Activated CD4-positive, alpha-beta T cell treated with anti-CD3 and anti-CD28 coated beads, Interleukin-2, amount 10 ng/mL, durations not matched to agents 24 days and 14 days (primary cell): ENCODE measurements at regions of chr1 and their contacts with region 1.

Region 1: GRCh38 chr1:228405987-228406265 is 709 bp downstream of the TRIM11 start:
- DNase-seq: no peak
- H3K4me3 Mint-ChIP-seq: peak overlapping the region; percentile 98
- H3K27ac Mint-ChIP-seq: peak overlapping the region; percentile 94
- H3K4me1 Mint-ChIP-seq: peaks cover 49% of the 10 kb centered on the region
- H3K27me3 Mint-ChIP-seq: no peaks in the 10 kb centered on the region

Region 2: DNA sequence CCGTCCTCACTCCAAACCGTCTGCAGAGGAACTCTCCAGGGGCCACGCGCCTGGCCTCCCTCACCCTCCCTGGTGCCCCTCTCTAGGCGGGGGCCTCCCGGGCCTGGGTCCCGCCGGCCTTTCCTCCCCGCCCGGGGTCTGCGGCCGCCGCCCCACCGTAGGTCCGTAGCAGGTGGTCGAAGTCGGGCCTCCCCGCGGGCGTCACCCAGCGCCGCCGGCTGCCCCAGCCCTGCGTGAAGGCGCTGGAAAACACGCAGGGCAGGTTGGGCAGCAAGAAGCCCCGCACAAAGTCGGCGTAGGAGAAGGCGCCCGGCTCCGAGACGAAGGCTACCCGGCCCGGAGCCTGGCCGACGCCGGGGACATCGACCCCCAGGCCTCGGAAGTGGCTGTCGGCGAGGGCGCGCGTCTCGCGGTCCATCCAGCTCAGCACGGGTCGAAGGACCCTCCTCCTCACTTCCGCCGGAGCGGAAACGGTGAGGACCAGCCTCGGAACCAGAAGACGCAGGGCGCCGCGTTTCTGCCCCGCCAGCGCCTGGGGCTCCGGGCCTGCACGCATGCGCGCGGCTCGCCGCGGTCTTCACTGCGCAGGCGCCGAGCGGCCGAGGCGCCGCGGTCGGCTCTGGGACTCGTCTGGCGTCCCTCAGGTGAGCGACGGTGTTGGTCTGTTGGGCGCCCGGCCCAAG is 670.9 kb before region 1 on chr1 and contains the starts of genes JMJD4 and SNAP47:
- intact Hi-C with region 1: loop called (anchors 1 kb)
- DNase-seq: peak; percentile 99
- H3K4me3 Mint-ChIP-seq: peak within 1 kb of the TSS; percentile 98
- H3K27ac Mint-ChIP-seq: peak within 1 kb of the TSS; percentile 93
- H3K4me1 Mint-ChIP-seq: peaks cover 26% of the 10 kb centered on the region
- H3K27me3 Mint-ChIP-seq: peaks cover 2% of the 10 kb centered on the region
- total RNA-seq, gene JMJD4: 34.8 and 35.1 TPM in 2 replicates
- total RNA-seq, gene SNAP47: 28.6 and 30.9 TPM in 2 replicates

Region 3: DNA sequence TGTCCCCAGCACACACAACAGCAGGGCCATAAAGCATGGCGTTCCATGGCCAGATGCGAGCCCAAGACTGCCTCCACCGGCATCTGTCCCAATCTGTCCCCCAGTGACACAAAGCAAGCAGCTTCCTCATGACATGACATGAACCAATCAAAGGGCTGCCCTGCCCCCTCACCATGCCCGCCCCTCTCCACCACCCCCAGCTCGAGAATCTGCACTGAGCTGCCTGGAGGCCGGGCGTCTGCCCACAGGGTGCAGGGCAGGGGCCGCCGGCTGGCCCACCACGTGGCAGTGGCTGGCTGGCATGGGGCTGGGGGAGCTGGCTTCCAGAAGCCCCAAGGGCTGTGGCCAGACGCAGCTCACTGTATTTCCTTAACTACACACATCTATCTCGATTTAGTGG is 486.0 kb before region 1 on chr1:
- intact Hi-C with region 1: no loop called
- DNase-seq: no peak
- H3K4me3 Mint-ChIP-seq: no peak overlapping the region
- H3K27ac Mint-ChIP-seq: no peak overlapping the region
- H3K4me1 Mint-ChIP-seq: no peaks in the 10 kb centered on the region
- H3K27me3 Mint-ChIP-seq: no peaks in the 10 kb centered on the region

Region 4: GRCh38 chr1:228109073-228109961 is 296.6 kb before region 1 on chr1 and contains the start of gene MRPL55:
- intact Hi-C with region 1: loop called (anchors 5 kb)
- DNase-seq: peak; percentile 100
- H3K4me3 Mint-ChIP-seq: peak within 1 kb of the TSS; percentile 95
- H3K27ac Mint-ChIP-seq: peak within 1 kb of the TSS; percentile 88
- H3K4me1 Mint-ChIP-seq: peaks cover 23% of the 10 kb centered on the region
- H3K27me3 Mint-ChIP-seq: peaks cover 2% of the 10 kb centered on the region
- total RNA-seq, gene MRPL55: 55.2 and 62.2 TPM in 2 replicates

Region 5: GRCh38 chr1:228212966-228213844 is 192.7 kb before region 1 on chr1:
- intact Hi-C with region 1: loop called (anchors 2 kb)
- DNase-seq: peak; percentile 95
- H3K4me3 Mint-ChIP-seq: peak overlapping the region; percentile 95
- H3K27ac Mint-ChIP-seq: peak overlapping the region; percentile 91
- H3K4me1 Mint-ChIP-seq: peaks cover 7% of the 10 kb centered on the region
- H3K27me3 Mint-ChIP-seq: no peaks in the 10 kb centered on the region

Region 6: GRCh38 chr1:228457396-228458176 is 51.7 kb after region 1 on chr1:
- intact Hi-C with region 1: loop called (anchors 1 kb)
- DNase-seq: peak; percentile 97
- H3K4me3 Mint-ChIP-seq: peak overlapping the region; percentile 97
- H3K27ac Mint-ChIP-seq: peak overlapping the region; percentile 99
- H3K4me1 Mint-ChIP-seq: peaks cover 47% of the 10 kb centered on the region
- H3K27me3 Mint-ChIP-seq: peaks cover 3% of the 10 kb centered on the region

Region 7: GRCh38 chr1:228486596-228487335 is 80.8 kb after region 1 on chr1:
- intact Hi-C with region 1: loop called (anchors 2 kb)
- DNase-seq: peak; percentile 93
- H3K4me3 Mint-ChIP-seq: peak overlapping the region; percentile 93
- H3K27ac Mint-ChIP-seq: peak overlapping the region; percentile 99
- H3K4me1 Mint-ChIP-seq: peaks cover 39% of the 10 kb centered on the region
- H3K27me3 Mint-ChIP-seq: no peaks in the 10 kb centered on the region